Dorsolateral prefrontal cortex (tissue), 120 donors: ENCODE measurements at regions of chr5 and their contacts with region 1.

Region 1: DNA sequence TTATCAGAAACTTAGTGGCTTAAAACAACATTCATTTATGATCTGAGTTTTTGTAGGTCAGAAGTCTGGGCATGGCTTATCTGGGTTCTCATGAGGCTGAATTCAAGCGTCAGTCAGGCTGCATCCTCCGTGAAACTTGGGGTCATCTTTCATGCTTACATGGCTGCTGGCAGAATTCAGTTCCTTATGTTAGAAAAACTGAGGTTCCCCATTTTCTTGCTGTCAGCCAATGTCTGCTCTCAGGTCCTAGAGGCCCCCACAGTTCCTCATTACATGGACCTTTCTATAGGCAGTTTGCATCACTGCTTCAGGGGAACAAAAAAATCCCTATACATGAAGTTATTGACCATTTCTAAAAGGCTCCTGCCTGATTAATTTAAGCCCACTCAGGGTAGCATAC is 83.8 kb upstream of the NMUR2 start:
- DNase-seq: no peak
- H3K4me3 ChIP-seq: no peak overlapping the region
- H3K27ac ChIP-seq: peak overlapping the region in 4 of 59 donors; percentile 12 to 70 (median 21)
- H3K27me3 ChIP-seq: no peaks in the 10 kb centered on the region
- CTCF ChIP-seq: no peak

Region 2: GRCh38 chr5:152389208-152389849 is 99.5 kb before region 1 on chr5:
- intact Hi-C with region 1: loop called in 1 of 2 experiments (anchors 5 kb)
- DNase-seq: no peak
- H3K4me3 ChIP-seq: no peak overlapping the region
- H3K27ac ChIP-seq: no peak overlapping the region
- H3K27me3 ChIP-seq: no peaks in the 10 kb centered on the region
- CTCF ChIP-seq: no peak

Region 3: DNA sequence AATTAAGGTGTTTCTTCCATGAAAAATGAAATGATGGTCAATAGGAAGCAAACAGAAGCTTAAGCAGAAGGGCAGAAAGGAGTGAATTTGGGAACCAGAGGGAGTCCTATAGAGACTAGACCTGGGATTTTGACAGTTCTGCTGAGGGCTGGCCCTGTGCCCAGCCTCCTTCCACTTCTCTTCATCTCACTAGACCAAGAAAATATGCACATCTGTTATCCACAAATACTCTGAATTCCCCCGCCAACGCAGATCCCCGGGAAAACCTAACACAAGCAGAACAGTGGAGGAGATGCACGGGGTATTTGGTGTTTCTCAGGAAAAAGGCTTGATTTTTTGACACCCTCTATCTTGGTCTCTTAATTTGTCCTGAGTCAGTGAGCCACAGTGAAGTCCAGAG is 1024.3 kb after region 1 on chr5:
- intact Hi-C with region 1: no loop called
- DNase-seq: peak in 9 of 10 donors; percentile 29 to 82 (median 71)
- H3K4me3 ChIP-seq: no peak overlapping the region
- H3K27ac ChIP-seq: peak overlapping the region in 5 of 59 donors; percentile 10 to 35 (median 22)
- H3K27me3 ChIP-seq: no peaks in the 10 kb centered on the region
- CTCF ChIP-seq: no peak